Prostate gland (tissue), 2 donors: ENCODE measurements at regions of chr16 and their contacts with region 1.

Region 1: GRCh38 chr16:76653390-76654026 is 376.3 kb downstream of the CNTNAP4 start:
- DNase-seq: no peak
- H3K4me3 ChIP-seq: no peak overlapping the region
- H3K27ac ChIP-seq: no peak overlapping the region
- H3K4me1 ChIP-seq: no peaks in the 10 kb centered on the region
- H3K27me3 ChIP-seq: no peaks in the 10 kb centered on the region
- CTCF ChIP-seq: peak in 2 of 4 experiments; percentile 24 to 25
- POLR2A ChIP-seq: no peak

Region 2: GRCh38 chr16:75794426-75794825 is 859.1 kb before region 1 on chr16:
- intact Hi-C with region 1: loop called (anchors 5 kb)
- DNase-seq: no peak
- H3K4me3 ChIP-seq: no peak overlapping the region
- H3K27ac ChIP-seq: no peak overlapping the region
- H3K4me1 ChIP-seq: no peaks in the 10 kb centered on the region
- H3K27me3 ChIP-seq: no peaks in the 10 kb centered on the region
- CTCF ChIP-seq: no peak
- POLR2A ChIP-seq: no peak

Region 3: GRCh38 chr16:77564791-77565390 is 911.4 kb after region 1 on chr16:
- intact Hi-C with region 1: no loop called
- DNase-seq: no peak
- H3K4me3 ChIP-seq: no peak overlapping the region
- H3K27ac ChIP-seq: no peak overlapping the region
- H3K4me1 ChIP-seq: no peaks in the 10 kb centered on the region
- H3K27me3 ChIP-seq: peaks cover 4% of the 10 kb centered on the region
- CTCF ChIP-seq: no peak
- POLR2A ChIP-seq: no peak